Activated B cell treated with CpG ODN at 0.5 μM for 24 hours (primary cell): ENCODE measurements at regions of chr14 and their contacts with region 1.

Region 1: GRCh38 chr14:73368616-73369015 is 89.7 kb downstream of the NUMB start:
- DNase-seq: no peak
- ATAC-seq: no peak
- H3K4me3 Mint-ChIP-seq: no peak overlapping the region
- H3K27ac Mint-ChIP-seq: no peak overlapping the region
- H3K4me1 Mint-ChIP-seq: peaks cover 15% of the 10 kb centered on the region
- H3K27me3 Mint-ChIP-seq: no peaks in the 10 kb centered on the region
- CTCF ChIP-seq: no peak

Region 2: GRCh38 chr14:73311708-73312030 is 56.9 kb before region 1 on chr14:
- CTCF ChIA-PET with region 1: no interaction called
- POLR2A ChIA-PET with region 1: no interaction called
- intact Hi-C with region 1: loop called (anchors 5 kb)
- DNase-seq: no peak
- ATAC-seq: no peak
- H3K4me3 Mint-ChIP-seq: peak overlapping the region; percentile 68
- H3K27ac Mint-ChIP-seq: peak overlapping the region; percentile 72
- H3K4me1 Mint-ChIP-seq: peaks cover 14% of the 10 kb centered on the region
- H3K27me3 Mint-ChIP-seq: no peaks in the 10 kb centered on the region
- CTCF ChIP-seq: no peak

Region 3: GRCh38 chr14:73358187-73358586 is 10.4 kb before region 1 on chr14:
- CTCF ChIA-PET with region 1: no interaction called
- POLR2A ChIA-PET with region 1: interaction called, 10 read pairs
- intact Hi-C with region 1: no loop called
- DNase-seq: no peak
- ATAC-seq: no peak
- H3K4me3 Mint-ChIP-seq: no peak overlapping the region
- H3K27ac Mint-ChIP-seq: no peak overlapping the region
- H3K4me1 Mint-ChIP-seq: peaks cover 4% of the 10 kb centered on the region
- H3K27me3 Mint-ChIP-seq: no peaks in the 10 kb centered on the region
- CTCF ChIP-seq: no peak

Region 4: DNA sequence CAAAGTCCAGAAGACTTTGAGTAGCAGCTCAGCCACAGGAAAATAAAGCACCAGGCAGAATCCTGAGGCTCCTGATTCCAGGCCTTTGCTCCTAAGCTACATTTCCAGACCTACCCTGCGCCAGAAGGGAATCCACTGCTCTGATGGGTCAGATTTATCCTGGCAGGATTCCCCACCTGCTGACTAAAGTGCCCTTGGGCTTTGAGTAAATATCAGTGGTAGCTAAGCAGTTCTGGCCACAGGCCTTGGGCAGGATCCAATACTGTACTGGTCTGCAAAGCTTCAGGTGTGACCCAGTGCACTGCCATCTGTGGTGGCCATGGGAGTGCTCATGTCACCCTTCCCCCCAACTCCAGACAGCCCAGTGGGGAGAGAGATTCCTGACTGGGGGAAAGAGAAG is 158.0 kb after region 1 on chr14:
- CTCF ChIA-PET with region 1: no interaction called
- POLR2A ChIA-PET with region 1: no interaction called
- intact Hi-C with region 1: no loop called
- DNase-seq: no peak
- ATAC-seq: no peak
- H3K4me3 Mint-ChIP-seq: no peak overlapping the region
- H3K27ac Mint-ChIP-seq: no peak overlapping the region
- H3K4me1 Mint-ChIP-seq: no peaks in the 10 kb centered on the region
- H3K27me3 Mint-ChIP-seq: no peaks in the 10 kb centered on the region
- CTCF ChIP-seq: no peak